Activated B cell treated with CpG ODN at 0.5 μM for 24 hours (primary cell): ENCODE measurements at regions of chr6 and their contacts with region 1.

Region 1: GRCh38 chr6:364609-365540 is 26.7 kb upstream of the IRF4 start:
- DNase-seq: no peak
- ATAC-seq: peak; percentile 76
- H3K4me3 Mint-ChIP-seq: peak overlapping the region; percentile 42
- H3K27ac Mint-ChIP-seq: peak overlapping the region; percentile 32
- H3K4me1 Mint-ChIP-seq: peaks cover 56% of the 10 kb centered on the region
- H3K27me3 Mint-ChIP-seq: peaks cover 2% of the 10 kb centered on the region
- CTCF ChIP-seq: no peak

Region 2: DNA sequence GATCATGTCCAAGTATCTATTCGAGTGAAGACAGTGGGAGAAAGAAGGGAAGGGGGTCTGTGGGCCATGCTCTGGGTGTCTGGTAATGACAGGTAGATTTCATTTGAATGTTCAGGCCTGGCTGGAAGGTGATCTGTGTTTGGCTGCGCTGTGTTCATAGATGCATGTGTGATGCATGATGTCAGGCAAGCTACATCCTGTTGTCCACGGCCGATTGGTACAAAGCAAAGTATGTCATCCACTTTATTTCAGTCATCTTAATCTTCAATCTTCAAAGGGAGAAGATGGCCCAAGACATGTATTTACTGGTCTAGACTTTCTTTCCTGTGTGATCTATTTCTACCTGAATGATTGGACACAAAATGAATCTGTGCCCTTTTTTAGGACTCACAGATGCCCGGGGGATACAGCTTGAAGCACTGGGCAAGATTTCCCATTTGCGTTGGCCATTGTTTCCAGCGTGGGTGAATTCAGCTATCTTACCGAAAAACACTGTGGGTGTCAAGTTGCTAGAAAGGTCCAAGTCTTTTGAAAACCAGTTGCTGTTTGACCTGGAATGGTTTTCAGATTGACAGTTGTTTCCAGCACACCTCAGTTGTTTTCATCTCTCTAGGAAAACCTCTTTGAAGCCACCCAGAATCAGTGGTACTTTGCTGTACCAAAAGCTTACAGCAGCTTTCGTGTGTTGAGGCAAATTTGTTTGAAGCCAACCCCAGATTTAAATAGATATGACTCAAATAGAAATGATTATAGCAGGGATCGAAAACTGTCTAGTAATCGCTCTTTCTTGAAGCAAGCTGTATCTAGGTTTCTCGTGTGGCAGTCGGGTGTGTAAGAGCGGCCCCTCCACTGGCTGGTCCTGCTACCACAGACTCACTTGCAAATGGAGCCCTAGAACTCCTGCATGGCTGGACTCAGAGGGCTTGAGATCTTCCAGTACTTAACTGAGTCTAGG is 45.4 kb before region 1 on chr6:
- CTCF ChIA-PET with region 1: no interaction called
- POLR2A ChIA-PET with region 1: no interaction called
- intact Hi-C with region 1: loop called (anchors 2 kb)
- DNase-seq: peak; percentile 7
- ATAC-seq: peak; percentile 58
- H3K4me3 Mint-ChIP-seq: peak overlapping the region; percentile 29
- H3K27ac Mint-ChIP-seq: peak overlapping the region; percentile 28
- H3K4me1 Mint-ChIP-seq: peaks cover 46% of the 10 kb centered on the region
- H3K27me3 Mint-ChIP-seq: no peaks in the 10 kb centered on the region
- CTCF ChIP-seq: no peak

Region 3: GRCh38 chr6:347232-347631 is 17.6 kb before region 1 on chr6:
- CTCF ChIA-PET with region 1: interaction called, 3 read pairs
- POLR2A ChIA-PET with region 1: interaction called, 10 read pairs
- intact Hi-C with region 1: no loop called
- DNase-seq: no peak
- ATAC-seq: peak; percentile 92
- H3K4me3 Mint-ChIP-seq: peak overlapping the region; percentile 59
- H3K27ac Mint-ChIP-seq: peak overlapping the region; percentile 77
- H3K4me1 Mint-ChIP-seq: peaks cover 68% of the 10 kb centered on the region
- H3K27me3 Mint-ChIP-seq: no peaks in the 10 kb centered on the region
- CTCF ChIP-seq: no peak